OCI-LY7 (cell line): ENCODE measurements at regions of chr9 and their contacts with region 1.

Region 1: GRCh38 chr9:100028201-100028784 is 70.5 kb downstream of the ERP44 start:
- DNase-seq: peak; percentile 83
- H3K4me3 ChIP-seq: no peak overlapping the region
- H3K27ac ChIP-seq: no peak overlapping the region
- H3K4me1 ChIP-seq: peaks cover 24% of the 10 kb centered on the region
- CTCF ChIP-seq: peak; percentile 99

Region 2: DNA sequence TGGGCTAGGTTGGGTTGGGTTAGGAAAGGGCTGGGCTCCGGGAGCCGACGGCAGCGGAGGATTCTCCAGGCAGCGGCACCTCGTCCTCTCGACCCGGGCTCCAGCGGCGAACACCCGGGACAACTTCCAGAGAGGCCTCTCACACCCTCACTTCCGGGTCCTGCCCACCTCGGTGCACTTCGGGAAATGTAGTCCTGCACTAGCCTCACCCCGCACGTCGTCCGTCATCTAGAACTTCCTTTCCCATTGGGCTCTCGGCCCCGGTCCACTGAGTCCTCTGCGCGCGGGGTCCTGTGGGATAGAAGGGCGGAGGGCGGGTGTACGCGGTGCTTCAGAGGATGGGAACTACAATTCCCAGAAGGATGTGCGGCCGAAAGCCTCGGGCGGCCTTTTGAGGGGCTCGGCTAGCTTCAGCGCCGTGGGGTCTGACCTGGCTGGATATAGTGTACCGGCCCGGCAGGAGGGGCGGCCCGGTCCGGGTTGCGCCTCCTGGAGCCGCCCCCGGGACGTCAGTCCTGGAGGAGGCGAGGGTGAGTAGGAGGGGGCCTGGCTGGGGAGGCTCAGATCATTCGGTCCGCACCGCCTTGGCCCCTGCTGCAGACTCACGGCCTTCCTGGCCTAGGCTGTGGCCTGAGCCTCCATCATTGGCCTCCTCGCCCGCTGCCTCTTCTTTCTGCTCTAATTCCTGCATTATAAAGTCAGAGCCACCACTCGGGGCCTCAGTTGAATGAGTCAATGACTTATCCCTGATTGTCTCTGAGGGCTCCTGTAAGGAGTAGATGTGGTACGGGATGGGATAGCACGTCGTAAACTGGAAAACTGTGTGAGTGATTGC is 70.8 kb after region 1 on chr9 and contains the starts of genes ERP44 and INVS:
- CTCF ChIA-PET with region 1: no interaction called
- POLR2A ChIA-PET with region 1: no interaction called
- intact Hi-C with region 1: loop called (anchors 1 kb)
- DNase-seq: peak; percentile 99
- H3K4me3 ChIP-seq: peak within 1 kb of the TSS; percentile 97
- H3K27ac ChIP-seq: peak within 1 kb of the TSS; percentile 71
- H3K4me1 ChIP-seq: peaks cover 34% of the 10 kb centered on the region
- CTCF ChIP-seq: no peak
- total RNA-seq, gene ERP44: 15.0 and 19.3 TPM in 2 replicates
- total RNA-seq, gene INVS: 30.7 and 33.1 TPM in 2 replicates

Region 3: DNA sequence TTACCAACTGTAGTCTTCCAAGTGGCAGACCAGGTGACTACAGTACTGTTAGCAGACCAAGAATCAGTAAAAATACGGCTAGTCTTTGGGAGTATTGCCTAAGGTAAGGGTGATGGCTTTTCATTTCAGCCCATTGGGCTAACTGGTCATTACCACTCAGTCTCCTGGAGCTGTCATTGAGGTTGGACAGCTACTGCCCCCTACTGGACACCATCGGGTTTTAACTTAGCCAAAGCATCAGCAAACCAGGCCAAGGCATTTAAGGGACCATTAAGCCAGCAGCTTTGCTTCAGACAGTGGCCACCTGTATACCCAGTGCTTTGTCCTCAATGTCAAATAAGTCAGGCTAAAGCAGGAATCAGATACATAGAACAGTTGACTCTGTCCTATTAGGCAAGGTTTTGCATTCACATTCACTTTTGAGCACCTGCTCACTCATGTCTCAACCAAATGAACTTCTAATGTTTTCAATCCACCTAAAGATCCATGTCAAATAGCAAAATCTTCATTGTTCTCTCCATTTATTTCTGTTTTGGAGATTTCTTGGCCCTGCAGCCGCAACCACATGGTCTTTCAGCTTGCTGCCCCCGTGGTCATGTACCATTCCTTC is 188.0 kb after region 1 on chr9:
- CTCF ChIA-PET with region 1: no interaction called
- POLR2A ChIA-PET with region 1: no interaction called
- intact Hi-C with region 1: loop called (anchors 1 kb)
- DNase-seq: peak; percentile 73
- H3K4me3 ChIP-seq: no peak overlapping the region
- H3K27ac ChIP-seq: no peak overlapping the region
- H3K4me1 ChIP-seq: peaks cover 10% of the 10 kb centered on the region
- CTCF ChIP-seq: peak; percentile 93

Region 4: DNA sequence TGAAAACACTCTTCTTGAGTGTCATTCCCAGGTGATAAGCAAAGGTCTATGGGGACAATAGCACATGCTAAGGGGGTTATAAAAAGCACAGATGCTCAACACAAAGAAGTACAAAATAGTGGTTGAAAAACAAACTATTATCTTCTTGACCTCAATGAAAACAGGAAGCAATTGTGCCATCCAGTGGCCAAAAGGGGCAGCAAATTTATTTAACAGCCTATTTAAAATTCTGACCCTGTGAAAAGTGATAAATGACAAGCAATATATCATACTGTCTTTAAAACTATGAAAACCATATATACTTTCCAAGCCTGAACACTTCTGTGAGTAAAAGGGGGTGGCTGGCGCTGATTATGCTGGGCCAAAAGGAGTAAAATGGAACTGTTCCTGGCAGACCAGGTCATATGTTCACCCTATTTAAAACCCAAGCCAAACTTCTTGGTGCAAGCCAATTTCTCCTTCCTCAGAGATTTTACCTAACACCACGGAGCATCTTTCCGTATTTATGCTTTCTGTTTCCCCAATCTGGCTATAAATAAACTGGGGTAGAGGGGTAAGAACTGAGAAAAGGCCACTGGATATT is 294.8 kb after region 1 on chr9:
- CTCF ChIA-PET with region 1: no interaction called
- POLR2A ChIA-PET with region 1: no interaction called
- intact Hi-C with region 1: loop called (anchors 2 kb)
- DNase-seq: peak; percentile 55
- H3K4me3 ChIP-seq: no peak overlapping the region
- H3K27ac ChIP-seq: no peak overlapping the region
- H3K4me1 ChIP-seq: no peaks in the 10 kb centered on the region
- CTCF ChIP-seq: peak; percentile 89

Region 5: DNA sequence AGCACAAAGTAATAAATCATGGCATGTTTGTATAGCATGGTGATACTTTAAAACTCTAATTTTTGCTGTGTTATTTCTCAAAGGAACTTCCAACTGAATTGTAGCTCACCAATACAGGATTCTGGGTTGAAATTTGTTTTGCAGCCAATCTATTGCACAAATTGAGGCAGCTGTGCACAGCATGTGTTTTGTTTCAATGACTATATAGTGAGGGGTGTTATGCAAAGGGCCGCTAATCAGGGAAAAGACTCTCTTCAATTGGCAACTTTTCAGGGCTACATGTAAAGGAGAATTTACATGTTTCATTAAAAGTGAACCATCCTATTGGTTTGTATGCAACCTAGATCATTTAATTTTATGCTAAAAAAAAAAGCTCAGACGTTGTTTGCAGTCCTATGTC is 1044.8 kb after region 1 on chr9:
- CTCF ChIA-PET with region 1: no interaction called
- POLR2A ChIA-PET with region 1: no interaction called
- intact Hi-C with region 1: no loop called
- DNase-seq: no peak
- H3K4me3 ChIP-seq: no peak overlapping the region
- H3K27ac ChIP-seq: no peak overlapping the region
- H3K4me1 ChIP-seq: no peaks in the 10 kb centered on the region
- CTCF ChIP-seq: no peak